Right lobe of liver (tissue), 6 donors: ENCODE measurements at regions of chr12 and their contacts with region 1.

Region 1: GRCh38 chr12:51341259-51342007 is 5.0 kb downstream of the CELA1 start:
- DNase-seq: peak in 2 of 3 donors; percentile 45 to 73
- ATAC-seq: peak; percentile 95 to 99 (median 98)
- H3K4me3 ChIP-seq: peak overlapping the region; percentile 14 to 34 (median 22)
- H3K27ac ChIP-seq: no peak overlapping the region
- H3K4me1 ChIP-seq: no peaks in the 10 kb centered on the region
- H3K27me3 ChIP-seq: no peaks in the 10 kb centered on the region
- CTCF ChIP-seq: peak; percentile 94 to 99 (median 96)
- POLR2A ChIP-seq: no peak

Region 2: DNA sequence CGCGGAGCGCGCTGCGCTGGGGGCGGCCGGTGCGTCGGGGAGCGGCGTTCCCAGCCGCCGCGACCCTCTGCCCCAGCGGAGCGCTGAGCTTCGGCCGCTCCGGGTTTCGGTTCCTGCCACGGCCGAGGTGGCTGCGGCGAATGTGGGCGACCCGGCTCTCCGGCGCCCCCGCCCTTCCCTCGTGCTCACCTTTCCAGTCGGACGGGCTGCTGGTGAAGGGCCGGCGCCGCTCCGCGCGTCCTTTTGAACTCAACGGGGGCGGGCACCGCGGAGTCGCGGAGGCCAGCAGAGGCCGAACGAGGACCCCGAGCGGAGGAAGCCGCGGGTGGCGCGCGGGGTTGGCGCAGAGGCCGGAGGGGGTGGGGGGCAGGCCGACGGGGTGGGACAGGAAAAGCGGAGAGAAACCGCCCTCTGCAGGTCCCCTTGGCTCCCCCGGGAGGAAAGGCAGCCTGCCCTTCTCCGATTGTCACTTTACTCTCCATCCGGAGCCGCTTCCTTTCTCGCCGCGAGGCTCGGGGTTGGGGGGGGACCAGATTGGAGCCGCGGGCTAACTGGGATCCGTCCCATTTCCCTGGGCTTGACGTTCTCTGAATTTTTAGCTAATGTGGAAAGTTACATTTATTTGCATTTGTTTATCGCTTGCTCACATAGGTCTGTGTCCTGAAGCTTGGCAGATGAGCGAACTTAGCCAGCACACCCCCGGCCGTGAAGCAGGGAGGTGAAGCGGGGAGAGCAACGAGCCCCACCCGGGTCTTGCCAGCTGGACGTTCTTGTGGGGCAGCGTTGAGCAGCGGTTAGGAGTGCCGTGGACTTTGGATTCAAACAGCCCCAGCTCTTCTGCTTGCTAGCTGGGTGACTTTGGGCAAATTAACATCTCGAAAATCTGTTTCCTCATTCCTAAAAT is 71.1 kb before region 1 on chr12 and contains the start of gene SMAGP:
- intact Hi-C with region 1: loop called in 1 of 2 experiments (anchors 5 kb)
- DNase-seq: peak; percentile 77 to 81 (median 78)
- ATAC-seq: peak; percentile 76 to 85 (median 80)
- H3K4me3 ChIP-seq: peak within 1 kb of the TSS; percentile 66 to 77 (median 76)
- H3K27ac ChIP-seq: peak within 1 kb of the TSS; percentile 56 to 82 (median 76)
- H3K4me1 ChIP-seq: peaks cover 0 to 6% (median 2%) of the 10 kb centered on the region in 4 donors
- H3K27me3 ChIP-seq: no peaks in the 10 kb centered on the region
- CTCF ChIP-seq: no peak
- POLR2A ChIP-seq: peak; percentile 72
- total RNA-seq, gene SMAGP: 2.9 to 9.7 (median 5.6) TPM